ENCODE measurements at regions of chr3 and their contacts with region 1.

Region 1: DNA sequence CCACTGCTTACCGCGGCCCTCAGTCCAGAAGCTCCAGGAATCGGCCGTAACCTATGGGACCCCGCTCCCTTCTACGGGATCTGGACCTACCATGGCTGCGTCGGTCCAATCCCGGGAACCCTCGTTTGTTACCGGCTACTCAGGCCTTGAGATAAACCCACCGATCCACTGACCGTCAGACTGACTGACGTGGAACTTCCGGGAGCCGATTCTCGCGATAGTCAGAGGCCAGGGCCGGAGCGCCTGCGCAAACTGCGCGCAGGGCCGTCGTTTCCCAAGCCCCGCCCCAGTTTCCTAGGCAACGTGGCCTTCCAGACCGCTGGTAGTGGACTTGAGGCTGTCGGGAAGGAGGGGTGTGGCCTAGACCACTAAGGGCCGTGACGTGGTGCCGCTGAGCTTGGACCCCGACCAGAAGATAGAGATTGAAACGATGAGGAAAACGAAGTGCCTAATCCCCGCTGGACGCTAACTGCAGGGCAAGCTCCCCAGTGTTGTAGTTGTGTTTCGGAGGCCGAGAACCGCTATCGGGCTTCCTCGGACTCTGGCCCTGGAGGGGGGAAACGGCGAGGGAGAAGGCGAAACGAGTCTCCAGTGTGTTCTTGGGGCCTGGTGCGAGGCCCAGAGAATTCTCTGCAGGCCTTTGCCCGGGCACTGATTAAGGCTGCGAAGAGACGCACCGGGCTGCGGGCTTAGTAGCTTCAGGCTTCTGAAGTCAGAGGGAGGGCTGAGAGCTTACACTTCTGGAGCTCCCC is at the start of gene COPB2:
- DNase-seq: peak; percentile 99 to 100 (median 99)
- H3K4me3 ChIP-seq: peak within 1 kb of the TSS; percentile 66 to 100 (median 97)
- H3K27ac ChIP-seq: peak within 1 kb of the TSS; percentile 70 to 98 (median 92)
- H3K27me3 ChIP-seq: no peaks in the 10 kb centered on the region
- CTCF ChIP-seq: peak in 18 of 56 donors; percentile 9 to 48 (median 27)
- total RNA-seq, gene COPB2: 59.7 to 117 (median 91.2) TPM

Region 2: DNA sequence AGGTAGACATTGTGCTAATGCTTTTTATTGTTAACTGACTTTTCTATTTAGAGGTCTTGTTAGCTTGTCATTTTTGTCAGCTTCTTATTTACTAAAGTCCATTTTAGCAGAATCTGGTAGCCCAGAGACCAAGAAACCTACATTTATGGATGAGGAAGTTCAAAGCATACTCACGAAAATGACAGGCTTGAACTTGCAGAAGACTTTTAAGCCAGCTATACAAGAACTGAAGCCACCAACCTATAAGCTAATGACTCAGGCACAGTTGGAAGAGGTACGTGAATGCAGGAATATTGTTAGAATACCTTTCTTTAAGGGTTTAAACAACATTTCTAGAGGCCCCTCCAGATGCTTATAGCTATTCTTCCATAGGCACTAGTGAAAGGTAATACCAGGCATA is 42.9 kb before region 1 on chr3:
- intact Hi-C with region 1: loop called (anchors 5 kb)
- DNase-seq: no peak
- H3K4me3 ChIP-seq: no peak overlapping the region
- H3K27ac ChIP-seq: peak overlapping the region in 5 of 59 donors; percentile 11 to 96 (median 49)
- H3K27me3 ChIP-seq: no peaks in the 10 kb centered on the region
- CTCF ChIP-seq: no peak

Region 3: GRCh38 chr3:139353920-139354556 is 35.6 kb before region 1 on chr3:
- intact Hi-C with region 1: loop called (anchors 5 kb)
- DNase-seq: peak in 2 of 10 donors; percentile 16 to 43
- H3K4me3 ChIP-seq: no peak overlapping the region
- H3K27ac ChIP-seq: peak overlapping the region in 50 of 59 donors; percentile 1 to 84 (median 72)
- H3K27me3 ChIP-seq: no peaks in the 10 kb centered on the region
- CTCF ChIP-seq: peak in 54 of 56 donors; percentile 22 to 83 (median 64)